ENCODE measurements at regions of chr1 and their contacts with region 1.

Region 1: DNA sequence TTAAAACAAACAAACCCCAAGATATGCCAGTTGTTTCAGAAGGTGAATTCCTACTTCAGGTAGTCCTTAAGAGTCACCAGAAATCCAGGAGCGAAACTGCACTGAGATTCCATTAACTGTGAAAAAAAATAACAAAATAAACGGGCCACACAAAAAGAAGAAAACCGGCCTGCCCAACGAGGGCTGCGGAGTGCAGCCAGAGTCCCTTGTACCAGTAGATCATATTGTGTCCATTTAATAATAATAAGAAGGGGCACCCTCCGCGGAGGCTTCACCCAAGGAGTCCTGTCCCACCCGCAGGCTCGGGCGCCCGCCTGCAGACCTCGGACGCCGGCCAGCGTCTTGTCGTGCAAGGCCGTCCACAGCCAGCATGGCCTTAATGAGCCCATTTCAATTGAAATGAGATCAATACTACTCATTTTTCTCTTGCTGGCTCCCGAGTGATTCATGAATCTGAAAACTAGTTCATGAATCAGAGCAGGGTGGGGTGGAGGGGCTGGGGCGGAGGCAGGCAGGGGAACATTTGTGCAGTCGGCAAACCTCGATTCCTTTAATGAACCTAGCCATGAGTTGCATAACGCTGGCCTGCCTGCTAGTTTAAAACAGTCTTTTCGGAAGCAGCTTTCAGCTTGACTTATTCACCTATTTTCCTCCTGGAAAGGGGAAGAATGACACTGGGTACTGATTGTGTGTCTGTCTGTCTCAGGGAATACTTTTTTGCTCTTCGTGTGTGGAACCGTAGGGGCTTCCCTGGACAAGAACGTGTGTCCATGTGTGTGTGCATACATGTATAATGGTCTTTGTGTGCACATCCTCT is 113.1 kb upstream of the IRF2BP2 start:
- DNase-seq: peak in 1 of 2 experiments; percentile 90
- H3K4me3 ChIP-seq: peak overlapping the region; percentile 53
- H3K27ac ChIP-seq: peak overlapping the region; percentile 97
- H3K4me1 ChIP-seq: peaks cover 71% of the 10 kb centered on the region
- H3K27me3 ChIP-seq: no peaks in the 10 kb centered on the region
- CTCF ChIP-seq: no peak

Region 2: DNA sequence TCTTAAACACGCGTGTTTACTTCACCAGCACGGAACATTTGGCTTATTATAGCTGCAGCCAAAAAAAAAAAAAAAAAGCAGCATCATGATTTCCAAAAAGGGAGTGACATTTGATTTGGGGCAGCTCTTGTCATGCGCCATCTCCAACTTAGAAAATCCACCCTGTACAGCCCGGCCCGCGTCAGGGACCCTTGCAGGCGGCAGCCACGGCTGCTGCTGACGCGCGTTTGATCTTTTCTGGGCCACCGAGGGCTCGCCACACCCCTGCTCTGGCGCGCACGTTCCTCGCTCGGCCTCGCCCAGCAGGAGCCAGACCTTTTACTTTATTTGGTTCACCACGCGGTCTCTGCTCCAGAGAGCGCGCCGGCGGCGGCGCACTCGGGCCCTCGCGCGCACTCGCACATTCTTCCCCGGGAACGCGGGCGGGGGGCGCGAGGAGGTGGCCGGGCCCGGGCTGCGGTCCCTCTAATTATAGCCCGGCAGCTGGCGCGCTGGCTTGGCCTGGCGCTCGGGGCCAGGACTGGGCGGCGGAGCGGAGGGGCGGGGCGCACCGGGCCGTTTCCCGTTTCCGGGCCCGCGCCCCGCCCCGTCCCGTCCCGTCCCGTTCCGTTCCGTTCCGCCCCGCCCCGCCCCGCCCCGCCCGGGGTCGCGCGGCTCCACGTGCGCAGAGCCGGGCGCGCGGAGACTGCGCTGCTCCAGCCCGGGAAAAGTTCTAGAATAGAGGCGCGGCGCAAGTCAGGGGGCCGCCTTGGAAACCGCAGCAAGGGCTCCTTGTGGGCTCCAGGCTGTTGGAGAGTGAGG is 123.3 kb before region 1 on chr1:
- CTCF ChIA-PET with region 1: no interaction called
- POLR2A ChIA-PET with region 1: interaction called, 11 read pairs
- intact Hi-C with region 1: no loop called
- DNase-seq: peak; percentile 69 to 89
- H3K4me3 ChIP-seq: peak overlapping the region; percentile 62
- H3K27ac ChIP-seq: peak overlapping the region; percentile 99
- H3K4me1 ChIP-seq: peaks cover 61% of the 10 kb centered on the region
- H3K27me3 ChIP-seq: no peaks in the 10 kb centered on the region
- CTCF ChIP-seq: no peak; the same call in 1 of the 2 replicates

Region 3: DNA sequence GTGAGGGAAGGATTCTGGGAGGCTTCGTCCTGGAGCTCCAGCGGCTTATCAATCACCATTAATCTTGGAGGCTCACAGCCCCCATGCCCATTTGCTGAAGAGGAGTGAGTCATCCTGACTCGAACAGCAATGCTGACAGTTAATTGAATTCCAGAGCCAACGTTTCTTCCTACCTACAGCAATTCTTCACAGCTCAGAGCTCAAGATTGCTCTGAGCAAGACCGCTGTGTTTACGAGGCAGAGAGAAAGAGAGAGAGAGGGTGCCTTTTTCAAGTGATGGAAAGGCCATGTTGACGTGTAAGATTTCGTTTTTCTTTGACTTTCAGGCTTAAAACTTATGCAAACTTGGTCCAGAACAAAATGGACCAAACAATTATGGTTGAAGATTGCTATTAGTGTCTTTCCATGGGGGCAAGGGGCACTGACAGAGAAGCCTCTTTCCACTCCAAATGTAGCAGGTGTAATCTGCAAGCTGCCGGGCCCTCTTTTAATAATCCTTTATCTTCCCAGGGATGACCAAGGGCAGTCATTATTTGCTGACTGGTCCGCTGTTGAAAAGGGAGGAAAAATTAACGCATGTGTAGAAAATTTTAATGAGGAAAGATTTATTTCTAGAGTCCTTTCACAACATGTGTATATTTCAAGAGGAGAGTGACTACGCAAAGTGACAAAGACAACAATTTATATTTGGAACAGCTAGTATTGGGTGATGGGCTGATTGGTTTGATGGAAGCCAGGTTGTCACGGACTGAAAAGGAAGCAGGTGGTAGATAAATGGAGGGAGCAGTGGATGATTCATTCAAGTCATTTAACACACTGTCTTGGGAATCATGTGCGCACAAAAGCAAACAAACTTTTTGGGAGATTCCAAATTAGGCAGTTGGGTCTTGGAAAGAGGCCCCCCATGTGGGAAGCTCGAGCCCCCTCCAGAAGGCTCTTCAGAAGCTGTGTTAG is 23.0 kb after region 1 on chr1:
- CTCF ChIA-PET with region 1: interaction called, 12 read pairs
- POLR2A ChIA-PET with region 1: no interaction called
- intact Hi-C with region 1: loop called (anchors 1 kb)
- DNase-seq: peak in 1 of 2 experiments; percentile 79
- H3K4me3 ChIP-seq: no peak overlapping the region
- H3K27ac ChIP-seq: peak overlapping the region; percentile 82
- H3K4me1 ChIP-seq: peaks cover 45% of the 10 kb centered on the region
- H3K27me3 ChIP-seq: no peaks in the 10 kb centered on the region
- CTCF ChIP-seq: no peak

Region 4: GRCh38 chr1:234899041-234899729 is 176.1 kb after region 1 on chr1:
- CTCF ChIA-PET with region 1: no interaction called
- POLR2A ChIA-PET with region 1: interaction called, 4 read pairs
- intact Hi-C with region 1: loop called (anchors 1 kb)
- DNase-seq: peak; percentile 82
- H3K4me3 ChIP-seq: no peak overlapping the region
- H3K27ac ChIP-seq: peak overlapping the region; percentile 59
- H3K4me1 ChIP-seq: peaks cover 67% of the 10 kb centered on the region
- H3K27me3 ChIP-seq: no peaks in the 10 kb centered on the region
- CTCF ChIP-seq: no peak

Region 5: GRCh38 chr1:234978397-234979295 is 255.5 kb after region 1 on chr1:
- CTCF ChIA-PET with region 1: no interaction called
- POLR2A ChIA-PET with region 1: interaction called, 4 read pairs
- intact Hi-C with region 1: loop called (anchors 1 kb)
- DNase-seq: peak; percentile 45 to 93
- H3K4me3 ChIP-seq: peak overlapping the region; percentile 30; the same call in 1 of the 2 replicates
- H3K27ac ChIP-seq: peak overlapping the region; percentile 99
- H3K4me1 ChIP-seq: peaks cover 99% of the 10 kb centered on the region
- H3K27me3 ChIP-seq: no peaks in the 10 kb centered on the region
- CTCF ChIP-seq: no peak

Region 6: DNA sequence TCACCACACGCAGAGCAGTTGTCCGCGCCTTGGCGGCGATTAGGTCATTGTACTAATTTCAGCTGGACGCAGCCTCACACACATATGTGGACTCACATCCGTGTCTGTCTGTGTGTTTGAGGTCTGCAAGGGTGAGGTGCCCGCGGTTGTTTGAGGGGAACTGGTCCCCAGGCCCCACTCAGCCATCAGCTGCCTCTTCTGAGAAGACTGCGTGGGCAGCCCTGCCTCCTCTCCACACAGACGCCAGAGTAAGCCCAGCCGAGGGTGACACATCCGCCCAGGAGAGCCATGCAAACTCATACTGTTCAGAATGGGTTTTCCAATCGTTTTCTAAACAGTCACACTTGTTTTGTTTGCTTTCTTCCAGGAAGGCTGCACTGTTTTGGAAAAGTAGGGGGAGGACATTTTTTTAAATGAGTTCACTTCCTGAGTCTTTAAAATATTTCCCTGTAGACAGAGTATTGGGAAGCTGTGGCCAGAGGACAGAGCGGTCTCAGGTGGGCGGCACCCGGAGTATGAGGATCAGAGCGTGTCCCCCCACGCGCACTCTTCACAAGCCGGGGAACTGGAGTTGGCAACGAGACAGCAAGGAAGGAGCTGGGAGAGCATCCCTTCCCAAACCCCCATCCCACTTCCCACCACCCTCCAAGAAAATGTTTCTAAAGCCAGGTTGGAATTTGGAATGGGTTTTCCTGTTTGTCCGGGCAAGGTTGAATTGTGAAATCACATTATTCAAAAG is 352.2 kb after region 1 on chr1:
- CTCF ChIA-PET with region 1: no interaction called
- POLR2A ChIA-PET with region 1: interaction called, 6 read pairs
- intact Hi-C with region 1: loop called (anchors 1 kb)
- DNase-seq: peak; percentile 66 to 95
- H3K4me3 ChIP-seq: peak overlapping the region; percentile 61
- H3K27ac ChIP-seq: peak overlapping the region; percentile 100
- H3K4me1 ChIP-seq: peaks cover 94% of the 10 kb centered on the region
- H3K27me3 ChIP-seq: no peaks in the 10 kb centered on the region
- CTCF ChIP-seq: no peak

Measured in PC-9 (cell line).